ENCODE measurements at regions of chr4 and their contacts with region 1.

Region 1: GRCh38 chr4:159175085-159175988 is 72.5 kb downstream of the RAPGEF2 start:
- DNase-seq: peak; percentile 64 to 81
- H3K4me3 ChIP-seq: peak overlapping the region; percentile 38; the same call in 1 of the 2 replicates
- H3K27ac ChIP-seq: peak overlapping the region; percentile 74
- H3K4me1 ChIP-seq: peaks cover 17% of the 10 kb centered on the region
- H3K27me3 ChIP-seq: no peaks in the 10 kb centered on the region
- CTCF ChIP-seq: peak; percentile 87

Region 2: GRCh38 chr4:158671915-158672806 is 503.2 kb before region 1 on chr4 and contains the start of gene ETFDH:
- CTCF ChIA-PET with region 1: no interaction called
- POLR2A ChIA-PET with region 1: no interaction called
- intact Hi-C with region 1: loop called (anchors 1 kb)
- DNase-seq: peak; percentile 95 to 98
- H3K4me3 ChIP-seq: peak within 1 kb of the TSS; percentile 83
- H3K27ac ChIP-seq: peak within 1 kb of the TSS; percentile 74
- H3K4me1 ChIP-seq: peaks cover 8% of the 10 kb centered on the region
- H3K27me3 ChIP-seq: no peaks in the 10 kb centered on the region
- CTCF ChIP-seq: peak; percentile 63
- total RNA-seq, gene ETFDH: 16.9 and 21.0 TPM in 2 replicates

Region 3: DNA sequence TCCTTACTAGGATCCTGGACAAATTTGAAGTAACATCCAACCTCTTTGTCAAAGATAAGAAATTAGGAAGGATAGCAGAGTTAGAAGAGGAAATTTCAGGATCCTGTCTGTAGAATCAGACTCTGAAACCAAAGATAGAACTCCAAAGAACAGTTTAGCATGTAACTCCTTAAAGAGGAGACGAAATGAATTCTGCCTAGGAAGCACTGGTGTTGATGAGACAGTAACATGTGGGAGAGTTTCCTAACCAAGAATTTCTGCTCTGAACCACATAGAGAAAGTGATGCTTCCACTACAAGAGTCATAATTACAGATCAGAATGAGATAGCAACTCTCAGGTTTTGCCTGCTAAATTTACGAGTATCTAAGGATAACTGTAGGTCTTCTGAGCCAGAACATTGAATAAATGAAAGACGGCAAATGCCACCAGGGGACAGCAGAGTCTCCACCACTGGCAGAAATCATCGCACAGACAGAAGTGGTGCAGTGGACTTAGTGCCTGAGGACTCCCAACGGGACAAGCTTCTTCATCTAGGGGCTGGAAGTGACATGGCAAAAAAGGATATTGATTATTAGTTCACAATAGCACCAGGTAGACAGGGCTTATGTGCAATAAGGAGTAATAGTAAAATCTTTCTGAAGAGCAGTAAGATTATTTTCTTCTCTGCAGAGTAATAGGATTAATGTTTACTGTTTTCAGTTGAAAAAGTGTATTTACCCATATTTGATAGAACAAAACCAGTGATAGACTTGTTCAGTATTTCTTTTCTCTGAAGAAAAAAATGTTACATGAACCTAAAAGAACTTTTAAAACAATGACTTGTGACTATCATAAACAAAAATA is 445.4 kb before region 1 on chr4:
- CTCF ChIA-PET with region 1: no interaction called
- POLR2A ChIA-PET with region 1: no interaction called
- intact Hi-C with region 1: loop called (anchors 1 kb)
- DNase-seq: peak in 1 of 2 experiments; percentile 43
- H3K4me3 ChIP-seq: no peak overlapping the region
- H3K27ac ChIP-seq: no peak overlapping the region
- H3K4me1 ChIP-seq: no peaks in the 10 kb centered on the region
- H3K27me3 ChIP-seq: no peaks in the 10 kb centered on the region
- CTCF ChIP-seq: peak; percentile 64

Region 4: DNA sequence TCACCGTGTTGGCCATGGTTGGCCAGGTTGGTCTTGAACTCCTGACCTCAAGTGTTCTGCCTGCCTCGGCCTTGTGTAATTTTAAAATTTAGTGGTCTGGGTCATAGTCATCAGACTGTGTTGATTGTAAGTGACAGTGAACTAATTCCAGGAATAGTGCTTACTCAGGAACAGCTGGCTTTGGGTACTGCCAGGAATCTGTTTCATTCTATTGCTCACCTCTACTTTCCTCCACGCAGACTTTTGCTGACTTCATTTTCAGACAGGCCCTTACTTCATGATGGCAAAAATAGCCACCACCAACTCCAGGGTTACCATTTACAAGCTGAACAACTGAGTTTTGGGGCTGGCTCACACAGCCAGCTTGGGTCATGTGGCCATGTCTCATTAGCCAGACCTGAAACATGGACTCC is 351.9 kb before region 1 on chr4:
- CTCF ChIA-PET with region 1: no interaction called
- POLR2A ChIA-PET with region 1: interaction called, 13 read pairs
- intact Hi-C with region 1: no loop called
- DNase-seq: no peak
- H3K4me3 ChIP-seq: no peak overlapping the region
- H3K27ac ChIP-seq: no peak overlapping the region
- H3K4me1 ChIP-seq: peaks cover 52% of the 10 kb centered on the region
- H3K27me3 ChIP-seq: no peaks in the 10 kb centered on the region
- CTCF ChIP-seq: no peak

Region 5: GRCh38 chr4:158873795-158874401 is 301.4 kb before region 1 on chr4:
- CTCF ChIA-PET with region 1: interaction called, 4 read pairs
- POLR2A ChIA-PET with region 1: interaction called, 3 read pairs
- intact Hi-C with region 1: loop called (anchors 1 kb)
- DNase-seq: peak; percentile 61 to 98
- H3K4me3 ChIP-seq: peak overlapping the region; percentile 26; the same call in 1 of the 2 replicates
- H3K27ac ChIP-seq: peak overlapping the region; percentile 83
- H3K4me1 ChIP-seq: peaks cover 22% of the 10 kb centered on the region
- H3K27me3 ChIP-seq: no peaks in the 10 kb centered on the region
- CTCF ChIP-seq: no peak

Region 6: DNA sequence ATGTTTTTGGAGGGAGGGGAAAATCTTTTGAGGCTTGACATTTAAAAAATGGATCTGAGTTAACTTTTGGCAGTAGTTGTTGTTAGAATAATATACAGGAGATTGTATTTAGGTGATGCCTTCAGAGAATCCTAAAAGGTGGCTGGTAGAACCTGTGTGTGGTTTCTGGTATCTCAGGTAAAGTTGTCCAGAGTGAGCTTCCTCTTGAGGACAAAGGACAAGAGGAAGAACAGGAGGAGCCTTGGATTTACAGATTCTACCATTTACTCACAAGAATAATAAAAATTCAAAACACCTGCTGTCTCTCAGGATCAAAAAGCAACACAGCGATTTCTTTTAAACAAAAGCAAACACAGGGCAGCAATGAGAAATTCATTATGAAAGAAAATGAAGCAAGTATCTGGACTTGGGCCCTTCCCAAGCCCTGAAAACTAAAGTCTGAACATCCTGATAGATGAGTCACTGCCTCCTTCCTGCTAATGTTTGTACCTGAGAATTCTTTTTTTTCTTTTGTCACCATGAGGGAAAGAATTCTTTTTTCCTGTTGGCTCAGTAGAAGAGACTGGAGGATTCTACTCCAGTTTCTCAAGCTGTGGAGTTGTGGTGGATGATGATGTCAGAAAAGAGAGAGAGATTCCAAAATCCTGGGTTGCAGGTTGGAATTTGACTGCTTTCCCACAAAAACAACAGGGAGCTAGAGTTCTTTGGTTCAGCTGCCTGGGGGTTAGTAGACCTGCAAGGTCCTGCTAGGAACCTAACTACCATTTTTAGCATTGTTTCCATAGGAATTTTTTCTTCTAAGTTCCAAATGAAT is 104.0 kb before region 1 on chr4:
- CTCF ChIA-PET with region 1: no interaction called
- POLR2A ChIA-PET with region 1: no interaction called
- intact Hi-C with region 1: loop called (anchors 1 kb)
- DNase-seq: peak; percentile 40 to 85
- H3K4me3 ChIP-seq: 0 out of 2 replicates have a peak overlapping the region, but pooled peaks have one; percentile 14
- H3K27ac ChIP-seq: peak overlapping the region; percentile 94
- H3K4me1 ChIP-seq: peaks cover 19% of the 10 kb centered on the region
- H3K27me3 ChIP-seq: no peaks in the 10 kb centered on the region
- CTCF ChIP-seq: no peak

Measured in PC-9 (cell line).